ENCODE measurements at regions of chr11 and their contacts with region 1.

Region 1: GRCh38 chr11:64652586-64653387 is 61.8 kb downstream of the SLC22A12 start:
- DNase-seq: peak in 1 of 2 donors; percentile 89
- H3K4me3 ChIP-seq: no peak overlapping the region
- H3K27ac ChIP-seq: no peak overlapping the region
- H3K4me1 ChIP-seq: no peaks in the 10 kb centered on the region
- H3K27me3 ChIP-seq: no peaks in the 10 kb centered on the region
- CTCF ChIP-seq: peak; percentile 87 to 94 (median 88)

Region 2: GRCh38 chr11:64358907-64359711 is 293.7 kb before region 1 on chr11 and contains the start of gene RPS6KA4:
- intact Hi-C with region 1: loop called (anchors 5 kb)
- DNase-seq: peak in 1 of 2 donors; percentile 83
- H3K4me3 ChIP-seq: peak within 1 kb of the TSS; percentile 75 to 95
- H3K27ac ChIP-seq: peak within 1 kb of the TSS; percentile 84 to 88
- H3K4me1 ChIP-seq: peaks cover 20 to 32% of the 10 kb centered on the region in 2 donors
- H3K27me3 ChIP-seq: no peaks in the 10 kb centered on the region
- CTCF ChIP-seq: peak in 1 of 3 experiments; percentile 16
- total RNA-seq, gene RPS6KA4: 81.5 TPM

Region 3: GRCh38 chr11:64448599-64449556 is 203.9 kb before region 1 on chr11:
- intact Hi-C with region 1: loop called (anchors 2 kb)
- DNase-seq: peak; percentile 51 to 92
- H3K4me3 ChIP-seq: peak overlapping the region; percentile 39 to 58
- H3K27ac ChIP-seq: peak overlapping the region; percentile 65 to 80
- H3K4me1 ChIP-seq: peaks cover 12 to 16% of the 10 kb centered on the region in 2 donors
- H3K27me3 ChIP-seq: no peaks in the 10 kb centered on the region
- CTCF ChIP-seq: peak; percentile 80 to 91 (median 90)

Region 4: DNA sequence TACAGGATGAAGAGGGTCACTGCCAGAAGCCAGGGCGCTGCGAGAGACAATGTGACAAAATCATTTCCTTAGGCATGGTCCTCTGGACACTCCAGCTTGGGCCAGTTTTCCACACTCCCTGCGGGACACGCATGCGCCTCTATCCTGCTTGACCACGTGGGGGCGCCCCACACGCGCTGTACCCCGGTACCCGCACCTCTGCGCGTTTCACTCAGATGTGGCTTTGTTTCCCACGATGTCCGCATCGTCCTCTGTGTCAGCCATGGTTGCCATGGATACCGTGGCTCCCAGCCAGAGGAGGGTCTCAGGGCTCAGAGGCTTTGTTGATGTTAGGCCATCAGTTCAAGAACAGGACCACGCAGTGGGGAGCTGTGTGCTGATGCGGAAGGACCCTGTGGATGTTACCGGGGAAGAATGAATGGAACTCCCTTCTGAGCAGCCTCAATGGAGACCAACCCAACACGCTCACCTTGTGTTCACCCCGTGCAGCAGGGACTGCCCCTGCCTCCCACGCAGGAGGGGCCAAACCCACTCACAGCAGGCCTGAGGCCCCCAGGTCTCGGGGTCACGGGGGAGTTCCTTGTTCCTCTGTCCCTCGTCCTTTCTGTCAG is 162.9 kb before region 1 on chr11:
- intact Hi-C with region 1: loop called (anchors 1 kb)
- DNase-seq: peak in 1 of 2 donors; percentile 69
- H3K4me3 ChIP-seq: no peak overlapping the region
- H3K27ac ChIP-seq: no peak overlapping the region
- H3K4me1 ChIP-seq: no peaks in the 10 kb centered on the region
- H3K27me3 ChIP-seq: no peaks in the 10 kb centered on the region
- CTCF ChIP-seq: peak; percentile 62 to 63 (median 63)

Region 5: GRCh38 chr11:64553551-64554201 is 99.1 kb before region 1 on chr11:
- intact Hi-C with region 1: loop called (anchors 1 kb)
- DNase-seq: no peak
- H3K4me3 ChIP-seq: no peak overlapping the region
- H3K27ac ChIP-seq: peak overlapping the region; percentile 72 to 78
- H3K4me1 ChIP-seq: peaks cover 11 to 20% of the 10 kb centered on the region in 2 donors
- H3K27me3 ChIP-seq: no peaks in the 10 kb centered on the region
- CTCF ChIP-seq: peak; percentile 93 to 98 (median 94)

Region 6: GRCh38 chr11:64688534-64688982 is 35.8 kb after region 1 on chr11:
- intact Hi-C with region 1: loop called (anchors 5 kb)
- DNase-seq: peak; percentile 39 to 93
- H3K4me3 ChIP-seq: peak overlapping the region; percentile 28 to 62
- H3K27ac ChIP-seq: peak overlapping the region; percentile 78 to 89
- H3K4me1 ChIP-seq: peaks cover 20 to 24% of the 10 kb centered on the region in 2 donors
- H3K27me3 ChIP-seq: no peaks in the 10 kb centered on the region
- CTCF ChIP-seq: peak; percentile 88 to 92 (median 91)